ENCODE measurements at regions of chr5 and their contacts with region 1.

Region 1: DNA sequence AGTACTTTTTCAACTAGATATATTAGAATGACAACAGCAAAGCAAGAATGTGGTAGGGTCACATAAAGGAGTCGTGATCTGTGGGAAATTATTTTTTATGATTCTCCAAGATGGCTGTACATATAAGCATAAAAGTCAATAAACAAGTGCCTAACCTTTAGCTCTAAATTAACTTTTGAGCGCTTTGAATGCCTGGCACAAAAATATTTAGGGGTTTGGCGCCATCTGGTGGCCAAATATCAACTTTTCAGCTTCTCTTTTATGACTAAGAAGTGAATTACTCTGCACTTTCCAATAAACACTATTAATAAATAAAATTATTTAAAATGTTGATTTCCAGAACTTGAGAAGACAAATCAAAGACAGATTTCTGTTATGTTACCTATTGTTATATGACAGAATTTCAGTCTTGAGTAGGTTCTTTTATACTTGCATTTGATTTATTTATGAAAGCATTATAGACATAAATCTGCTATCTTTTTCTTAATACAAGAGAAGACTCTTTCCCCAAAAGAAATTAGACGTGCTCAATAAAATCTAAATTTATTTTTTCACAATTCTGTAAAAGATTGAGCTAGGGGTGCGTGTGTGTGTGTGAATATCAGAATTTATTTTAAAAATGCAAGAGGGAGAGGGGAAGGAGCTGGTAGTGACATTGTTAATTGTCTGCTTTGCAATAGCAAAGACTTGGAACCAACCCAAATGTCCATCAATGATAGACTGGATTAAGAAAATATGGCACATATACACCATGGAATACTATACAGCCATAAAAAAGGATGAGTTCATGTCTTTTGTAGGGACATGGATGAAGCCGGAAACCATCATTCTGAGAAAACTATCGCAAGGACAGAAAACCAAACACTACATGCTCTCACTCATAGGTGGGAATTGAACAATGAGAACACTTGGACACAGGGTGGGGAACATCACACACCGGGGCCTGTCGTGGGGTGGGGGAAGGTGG is 36.7 kb upstream of the ARRDC3 start:
- DNase-seq: peak; percentile 81

Region 2: GRCh38 chr5:90932052-90932699 is 487.7 kb before region 1 on chr5:
- intact Hi-C with region 1: loop called in 1 of 2 experiments (anchors 10 kb)
- DNase-seq: no peak

Region 3: DNA sequence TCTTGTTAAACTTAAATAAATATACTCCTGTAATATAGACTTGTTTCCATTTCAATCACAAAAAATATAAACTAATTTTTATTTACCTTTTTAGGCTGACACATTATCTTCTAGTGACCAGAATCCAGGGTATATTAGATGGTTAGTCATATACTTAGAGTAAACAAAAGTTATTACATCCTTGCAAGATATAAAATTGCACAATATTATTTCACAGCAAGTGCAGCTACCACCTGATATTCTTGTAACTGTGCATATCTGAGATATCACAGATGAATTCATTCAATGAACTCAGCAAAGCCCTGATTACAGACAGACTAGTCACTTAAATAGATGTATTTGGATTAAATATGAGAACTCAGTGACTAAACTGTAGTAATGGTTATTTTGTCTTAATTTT is 11.1 kb before region 1 on chr5:
- intact Hi-C with region 1: no loop called
- DNase-seq: no peak

Measured in posterior vena cava (tissue), 2 donors.